Mammary epithelial cell (primary cell): ENCODE measurements at regions of chr2 and their contacts with region 1.

Region 1: GRCh38 chr2:197434541-197435513 is at the start of gene SF3B1:
- DNase-seq: peak; percentile 98
- H3K4me3 ChIP-seq: peak within 1 kb of the TSS; percentile 76 to 91 (median 88)
- H3K27ac ChIP-seq: peak within 1 kb of the TSS; percentile 94
- H3K4me1 ChIP-seq: peaks cover 12% of the 10 kb centered on the region
- H3K27me3 ChIP-seq: no peaks in the 10 kb centered on the region
- CTCF ChIP-seq: no peak
- total RNA-seq, gene SF3B1: 132 to 153 TPM

Region 2: GRCh38 chr2:196535742-196536141 is 899.1 kb before region 1 on chr2:
- CTCF ChIA-PET with region 1: no interaction called
- dilution Hi-C with region 1: no loop called
- in situ Hi-C with region 1: no loop called
- intact Hi-C with region 1: no loop called
- DNase-seq: no peak
- H3K4me3 ChIP-seq: no peak overlapping the region
- H3K27ac ChIP-seq: no peak overlapping the region
- H3K4me1 ChIP-seq: no peaks in the 10 kb centered on the region
- H3K27me3 ChIP-seq: peaks cover 4% of the 10 kb centered on the region
- CTCF ChIP-seq: peak in 1 of 2 donors; percentile 17

Region 3: DNA sequence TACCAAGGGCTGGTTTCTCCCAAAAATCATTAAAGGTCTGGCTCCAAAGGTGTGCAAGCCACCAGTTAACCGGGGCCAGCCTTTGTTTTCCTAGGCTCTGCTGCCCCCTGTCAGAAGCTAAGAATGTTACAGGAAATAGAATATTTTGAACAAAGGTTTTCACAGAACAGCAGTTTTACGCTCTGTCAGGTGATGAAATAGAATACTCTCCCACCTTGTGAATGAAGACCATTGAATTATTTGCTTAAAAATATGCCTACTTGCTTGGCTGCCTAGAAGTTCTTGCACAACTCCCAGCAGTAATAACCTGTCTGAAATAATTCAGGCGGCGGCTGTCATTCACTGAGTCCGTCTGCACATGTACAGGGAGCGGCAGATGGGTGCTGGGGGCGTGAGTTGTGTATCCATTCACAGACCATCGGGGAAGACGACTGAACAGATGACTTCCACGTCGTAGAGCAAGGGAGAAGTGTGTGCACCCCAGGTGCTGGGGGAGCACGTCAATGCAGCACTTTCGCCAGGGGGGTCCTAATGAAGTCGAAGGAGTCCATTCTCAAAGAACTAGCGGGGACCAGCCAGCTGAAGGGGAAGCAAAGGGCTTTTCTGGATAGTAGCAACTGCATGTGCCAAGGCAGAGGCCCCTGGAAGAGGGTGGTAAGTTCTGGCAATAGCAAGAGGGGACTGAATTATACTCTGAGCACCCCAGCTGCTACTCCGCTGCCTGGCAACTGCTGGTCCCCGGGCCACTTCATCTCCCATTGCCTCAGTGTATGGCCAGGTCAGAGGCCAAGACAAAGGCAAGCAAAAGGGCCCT is 56.1 kb before region 1 on chr2:
- CTCF ChIA-PET with region 1: no interaction called
- dilution Hi-C with region 1: no loop called
- in situ Hi-C with region 1: no loop called
- intact Hi-C with region 1: no loop called
- DNase-seq: peak; percentile 25
- H3K4me3 ChIP-seq: peak overlapping the region in 1 of 3 experiments; percentile 23
- H3K27ac ChIP-seq: no peak overlapping the region
- H3K4me1 ChIP-seq: peaks cover 3% of the 10 kb centered on the region
- H3K27me3 ChIP-seq: no peaks in the 10 kb centered on the region
- CTCF ChIP-seq: peak; percentile 75 to 79

Region 4: GRCh38 chr2:197453161-197453914 is 18.5 kb after region 1 on chr2 and contains the start of gene COQ10B:
- CTCF ChIA-PET with region 1: interaction called, 7 read pairs
- dilution Hi-C with region 1: no loop called
- in situ Hi-C with region 1: no loop called
- intact Hi-C with region 1: loop called (anchors 1 kb)
- DNase-seq: peak; percentile 99
- H3K4me3 ChIP-seq: peak within 1 kb of the TSS; percentile 80 to 100 (median 84)
- H3K27ac ChIP-seq: peak within 1 kb of the TSS; percentile 98
- H3K4me1 ChIP-seq: peaks cover 13% of the 10 kb centered on the region
- H3K27me3 ChIP-seq: no peaks in the 10 kb centered on the region
- CTCF ChIP-seq: peak in 1 of 2 donors; percentile 37
- total RNA-seq, gene COQ10B: 23.9 to 40.0 TPM

Region 5: GRCh38 chr2:197777823-197778407 is 343.1 kb after region 1 on chr2:
- CTCF ChIA-PET with region 1: no interaction called
- dilution Hi-C with region 1: no loop called
- in situ Hi-C with region 1: no loop called
- intact Hi-C with region 1: loop called (anchors 5 kb)
- DNase-seq: peak; percentile 4
- H3K4me3 ChIP-seq: no peak overlapping the region
- H3K27ac ChIP-seq: no peak overlapping the region
- H3K4me1 ChIP-seq: no peaks in the 10 kb centered on the region
- H3K27me3 ChIP-seq: no peaks in the 10 kb centered on the region
- CTCF ChIP-seq: peak; percentile 60 to 64

Region 6: GRCh38 chr2:197934934-197935289 is 500.1 kb after region 1 on chr2:
- CTCF ChIA-PET with region 1: no interaction called
- dilution Hi-C with region 1: no loop called
- in situ Hi-C with region 1: no loop called
- intact Hi-C with region 1: no loop called
- DNase-seq: no peak
- H3K4me3 ChIP-seq: no peak overlapping the region
- H3K27ac ChIP-seq: no peak overlapping the region
- H3K4me1 ChIP-seq: no peaks in the 10 kb centered on the region
- H3K27me3 ChIP-seq: no peaks in the 10 kb centered on the region
- CTCF ChIP-seq: no peak